RWPE1 (cell line): ENCODE measurements at regions of chr19 and their contacts with region 1.

Region 1: GRCh38 chr19:39397360-39398296 is 6.5 kb downstream of the MED29 start:
- DNase-seq: peak; percentile 76
- H3K27ac ChIP-seq: peak overlapping the region; percentile 100
- CTCF ChIP-seq: peak; percentile 95

Region 2: DNA sequence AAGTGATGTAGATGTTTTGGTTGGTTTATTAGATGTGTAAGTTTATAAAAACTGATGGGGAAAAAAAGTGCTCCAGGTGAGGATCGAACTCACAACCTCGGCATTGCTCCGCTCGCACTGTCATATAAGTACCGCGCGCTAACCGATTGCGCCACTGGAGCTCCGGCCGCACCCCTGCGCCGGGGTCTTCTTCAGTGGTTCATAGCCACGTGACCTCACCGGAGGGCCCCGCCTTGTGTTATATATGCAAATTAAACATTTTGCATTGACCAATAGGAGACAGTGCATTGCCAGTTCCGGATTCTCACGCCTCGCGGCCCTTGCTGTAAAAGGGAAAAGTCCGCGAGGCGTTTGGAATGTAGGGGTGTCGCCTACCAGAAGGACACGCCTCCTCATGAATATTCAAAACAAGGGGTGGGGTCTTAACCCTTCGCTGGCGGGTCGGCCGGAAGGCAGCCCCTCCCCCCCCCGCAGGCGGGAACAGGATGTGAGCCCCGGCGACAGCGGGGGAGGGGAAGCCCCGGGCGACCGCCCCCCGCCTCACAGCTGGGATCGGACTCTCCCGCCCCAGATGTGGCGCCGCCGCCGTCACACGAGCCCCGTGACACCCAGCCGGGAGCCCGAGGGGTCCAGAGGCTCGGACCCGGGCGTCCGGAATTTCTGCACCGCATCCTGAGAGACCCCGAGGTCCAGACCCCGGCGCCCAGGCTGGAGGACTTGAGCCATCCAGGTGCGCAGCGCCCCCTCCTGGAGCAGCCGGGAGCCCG is 14.7 kb after region 1 on chr19 and contains the start of gene PLEKHG2:
- CTCF ChIA-PET with region 1: interaction called, 55 read pairs
- POLR2A ChIA-PET with region 1: interaction called, 13 read pairs
- DNase-seq: peak; percentile 97
- H3K27ac ChIP-seq: peak within 1 kb of the TSS; percentile 100
- CTCF ChIP-seq: peak; percentile 83; the same call in 1 of the 2 replicates

Region 3: GRCh38 chr19:39599116-39599515 is 201.5 kb after region 1 on chr19:
- CTCF ChIA-PET with region 1: no interaction called
- POLR2A ChIA-PET with region 1: no interaction called
- DNase-seq: peak; percentile 16
- H3K27ac ChIP-seq: no peak overlapping the region
- CTCF ChIP-seq: no peak

Region 4: GRCh38 chr19:39631178-39631577 is 233.6 kb after region 1 on chr19:
- CTCF ChIA-PET with region 1: no interaction called
- POLR2A ChIA-PET with region 1: no interaction called
- DNase-seq: no peak
- H3K27ac ChIP-seq: no peak overlapping the region
- CTCF ChIP-seq: no peak